Activated T-helper 2 cell treated with anti-CD3 and anti-CD28 coated beads, Interferon-gamma antibody, Interleukin-2, Interleukin-4, amounts not matched to agents 10 μg/mL and 5 μg/mL and 100 μg/mL, durations not matched to agents 14 hours and 24 hours and 36 hours (primary cell): ENCODE measurements at regions of chr3 and their contacts with region 1.

Region 1: GRCh38 chr3:113051302-113051711 is 60.5 kb downstream of the GTPBP8 start:
- DNase-seq: peak; percentile 79
- H3K4me3 Mint-ChIP-seq: no peak overlapping the region
- H3K27ac Mint-ChIP-seq: no peak overlapping the region
- H3K4me1 Mint-ChIP-seq: peaks cover 5% of the 10 kb centered on the region
- H3K27me3 Mint-ChIP-seq: no peaks in the 10 kb centered on the region

Region 2: GRCh38 chr3:113111011-113111707 is 59.9 kb after region 1 on chr3:
- intact Hi-C with region 1: loop called (anchors 5 kb)
- DNase-seq: peak; percentile 19
- H3K4me3 Mint-ChIP-seq: no peak overlapping the region
- H3K27ac Mint-ChIP-seq: peak overlapping the region; percentile 64
- H3K4me1 Mint-ChIP-seq: peaks cover 58% of the 10 kb centered on the region
- H3K27me3 Mint-ChIP-seq: no peaks in the 10 kb centered on the region

Region 3: DNA sequence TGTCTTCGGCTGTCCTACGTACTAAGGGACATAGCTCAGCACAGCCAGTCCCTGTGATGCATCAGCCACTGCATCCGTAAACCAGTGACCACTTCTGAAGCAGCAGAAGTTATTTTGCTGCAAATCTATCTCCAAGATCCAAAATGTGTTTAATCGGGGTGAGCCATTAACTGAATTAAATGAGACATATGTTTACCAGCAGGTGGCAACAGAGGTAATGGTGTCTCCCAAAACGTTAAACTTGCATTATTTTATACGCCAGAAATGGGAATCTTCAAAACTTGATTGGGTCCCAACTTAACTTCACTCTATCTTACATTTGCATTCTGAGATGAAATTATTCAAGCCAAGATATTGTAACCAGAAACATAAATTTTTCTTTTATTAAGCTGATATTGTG is 84.8 kb after region 1 on chr3:
- intact Hi-C with region 1: loop called (anchors 2 kb)
- DNase-seq: no peak
- H3K4me3 Mint-ChIP-seq: no peak overlapping the region
- H3K27ac Mint-ChIP-seq: no peak overlapping the region
- H3K4me1 Mint-ChIP-seq: peaks cover 5% of the 10 kb centered on the region
- H3K27me3 Mint-ChIP-seq: no peaks in the 10 kb centered on the region

Region 4: DNA sequence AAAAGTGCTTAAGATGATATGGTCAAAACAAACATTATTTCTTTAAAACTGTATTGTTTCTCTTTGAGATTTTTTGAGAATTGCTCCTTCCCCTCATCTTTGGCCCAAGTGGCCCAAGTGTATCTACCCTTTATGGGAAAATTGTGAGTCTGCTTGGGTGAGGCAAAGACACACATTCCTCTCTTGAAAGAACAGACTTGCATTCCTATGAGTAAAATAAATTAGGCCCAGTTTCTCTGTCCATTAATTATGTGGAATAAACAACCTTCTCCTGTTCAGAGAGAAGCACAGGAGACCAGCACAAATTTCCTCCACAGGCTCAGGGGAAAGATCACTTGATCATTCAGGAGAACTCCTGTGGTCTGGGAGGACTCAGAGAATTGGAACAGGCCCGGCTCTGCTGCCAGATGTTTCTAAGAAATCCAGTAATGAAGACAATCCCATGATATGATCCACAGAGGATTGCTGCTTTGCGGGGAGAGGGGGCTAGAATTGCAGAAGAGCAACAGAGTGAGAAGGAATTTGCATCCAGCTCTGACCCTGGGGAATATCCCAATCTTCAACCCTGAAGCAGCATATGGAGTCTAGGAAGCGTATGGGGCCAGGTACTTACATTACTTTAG is 106.2 kb after region 1 on chr3:
- intact Hi-C with region 1: no loop called
- DNase-seq: no peak
- H3K4me3 Mint-ChIP-seq: no peak overlapping the region
- H3K27ac Mint-ChIP-seq: no peak overlapping the region
- H3K4me1 Mint-ChIP-seq: no peaks in the 10 kb centered on the region
- H3K27me3 Mint-ChIP-seq: peaks cover 4% of the 10 kb centered on the region

Region 5: DNA sequence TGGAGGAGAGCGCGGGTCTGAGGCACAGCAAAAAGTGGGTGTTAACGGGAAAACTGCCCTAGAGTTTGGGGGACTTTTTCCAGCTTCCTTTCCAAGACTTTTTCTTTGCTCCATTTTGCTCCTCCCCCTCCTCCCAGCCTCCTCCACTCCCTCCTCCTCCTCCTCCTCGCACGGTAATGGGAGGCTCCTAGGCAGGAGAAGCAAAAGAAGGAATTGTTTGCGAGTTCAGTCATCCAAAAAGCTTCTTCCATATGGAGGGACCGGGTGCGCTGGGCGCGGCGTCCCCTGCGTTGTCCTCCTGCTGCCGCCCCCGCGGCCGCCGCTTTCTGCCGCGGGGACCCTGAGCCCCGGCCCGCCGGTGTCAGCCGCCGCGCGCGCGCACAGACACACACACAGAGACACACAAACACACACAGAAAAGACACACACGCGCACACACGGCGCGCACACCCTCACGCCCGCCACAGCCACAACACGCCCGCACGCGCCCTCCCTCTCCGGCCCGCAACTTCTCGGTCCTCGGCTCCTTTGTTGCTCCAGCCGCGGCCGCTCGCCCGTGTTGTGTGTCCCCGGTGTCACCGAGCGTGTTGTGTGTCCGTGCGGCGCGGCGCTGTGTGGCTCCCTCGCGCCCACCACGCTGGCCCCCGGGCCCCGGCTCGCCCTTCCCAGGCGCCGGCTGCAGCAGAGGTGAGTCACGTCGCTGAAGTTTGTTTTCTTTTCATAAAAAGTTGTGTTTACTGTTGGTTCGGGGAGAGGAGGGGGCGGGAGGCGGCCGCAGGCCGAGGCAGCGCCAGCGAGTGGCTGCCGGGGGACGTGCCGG is 160.2 kb after region 1 on chr3 and contains the start of gene BOC:
- intact Hi-C with region 1: loop called (anchors 5 kb)
- DNase-seq: no peak
- H3K4me3 Mint-ChIP-seq: peak within 1 kb of the TSS; percentile 84
- H3K27ac Mint-ChIP-seq: peak within 1 kb of the TSS; percentile 58
- H3K4me1 Mint-ChIP-seq: peaks cover 9% of the 10 kb centered on the region
- H3K27me3 Mint-ChIP-seq: peaks cover 75% of the 10 kb centered on the region
- total RNA-seq, gene BOC: 4.2 and 5.4 TPM in 2 replicates

Region 6: DNA sequence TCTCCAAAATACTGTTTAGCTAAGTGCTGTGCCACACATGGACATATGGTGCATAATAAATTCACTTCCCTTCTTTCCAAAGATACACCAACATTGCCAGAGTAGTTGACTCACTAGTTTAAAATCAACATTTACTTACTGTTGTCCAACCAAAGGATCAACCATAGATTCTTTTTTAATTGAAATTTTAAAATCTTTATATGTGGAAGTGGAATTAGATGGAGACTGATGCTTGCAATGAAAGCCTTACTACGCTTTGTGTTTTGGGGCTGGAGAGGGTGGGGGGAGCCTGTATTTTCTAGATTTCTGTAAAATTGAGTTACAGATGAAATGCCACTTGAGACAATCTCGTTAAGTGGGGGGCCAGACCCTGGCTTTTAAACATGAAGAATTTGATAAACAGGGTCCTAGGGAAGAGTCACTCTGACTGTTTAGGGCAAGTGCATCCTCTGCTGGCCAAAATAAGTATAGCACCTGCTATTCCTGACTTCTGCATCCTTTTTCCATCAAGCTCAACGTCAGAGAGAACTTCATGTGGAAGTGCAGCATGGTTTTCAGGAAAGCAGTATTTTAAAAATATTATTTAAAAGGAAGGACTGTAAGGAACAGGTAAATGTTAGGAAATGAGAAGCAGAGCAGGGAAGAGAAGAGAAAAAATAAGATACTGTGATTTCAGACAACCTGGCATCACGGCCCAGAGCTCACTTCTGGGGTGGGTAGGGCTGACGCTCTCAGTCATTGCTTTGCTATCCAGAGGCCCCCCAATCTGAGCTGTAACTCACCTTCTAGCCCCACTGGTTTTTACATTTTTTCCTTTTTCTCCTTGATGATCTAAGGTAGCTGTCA is 236.7 kb after region 1 on chr3:
- intact Hi-C with region 1: loop called (anchors 1 kb)
- DNase-seq: no peak
- H3K4me3 Mint-ChIP-seq: no peak overlapping the region
- H3K27ac Mint-ChIP-seq: no peak overlapping the region
- H3K4me1 Mint-ChIP-seq: peaks cover 6% of the 10 kb centered on the region
- H3K27me3 Mint-ChIP-seq: no peaks in the 10 kb centered on the region

Region 7: GRCh38 chr3:113575206-113575605 is 523.9 kb after region 1 on chr3:
- intact Hi-C with region 1: loop called (anchors 2 kb)
- DNase-seq: no peak
- H3K4me3 Mint-ChIP-seq: no peak overlapping the region
- H3K27ac Mint-ChIP-seq: no peak overlapping the region
- H3K4me1 Mint-ChIP-seq: peaks cover 3% of the 10 kb centered on the region
- H3K27me3 Mint-ChIP-seq: no peaks in the 10 kb centered on the region